ENCODE measurements at regions of chr14 and their contacts with region 1.

Region 1: GRCh38 chr14:55129428-55130195 is 560 bp downstream of the LGALS3 start:
- DNase-seq: peak; percentile 32
- H3K4me3 Mint-ChIP-seq: peak overlapping the region; percentile 79
- H3K27ac Mint-ChIP-seq: peak overlapping the region; percentile 70
- H3K4me1 Mint-ChIP-seq: peaks cover 26% of the 10 kb centered on the region
- H3K27me3 Mint-ChIP-seq: peaks cover 32% of the 10 kb centered on the region

Region 2: DNA sequence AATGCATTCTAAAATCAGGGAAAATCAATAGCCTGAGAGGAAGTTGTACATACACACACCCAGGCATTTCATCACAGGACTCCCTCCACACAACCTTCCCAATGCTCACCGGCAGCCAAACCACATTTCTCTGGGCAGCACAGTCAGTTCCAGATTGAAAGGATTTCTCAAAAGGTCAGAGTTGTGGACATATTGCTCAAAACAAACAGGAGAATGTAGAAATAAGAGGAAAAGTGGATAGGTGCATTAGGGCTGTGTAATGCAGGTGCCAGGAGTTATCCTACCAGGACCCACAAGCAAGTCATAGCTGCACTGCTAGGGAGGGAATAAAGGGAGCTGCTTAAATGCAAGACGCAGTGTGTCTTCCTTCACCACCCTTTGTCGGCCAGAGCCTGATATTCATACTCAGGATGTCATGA is 289.9 kb before region 1 on chr14:
- intact Hi-C with region 1: no loop called
- DNase-seq: no peak
- H3K4me3 Mint-ChIP-seq: no peak overlapping the region
- H3K27ac Mint-ChIP-seq: no peak overlapping the region
- H3K4me1 Mint-ChIP-seq: no peaks in the 10 kb centered on the region
- H3K27me3 Mint-ChIP-seq: no peaks in the 10 kb centered on the region

Region 3: DNA sequence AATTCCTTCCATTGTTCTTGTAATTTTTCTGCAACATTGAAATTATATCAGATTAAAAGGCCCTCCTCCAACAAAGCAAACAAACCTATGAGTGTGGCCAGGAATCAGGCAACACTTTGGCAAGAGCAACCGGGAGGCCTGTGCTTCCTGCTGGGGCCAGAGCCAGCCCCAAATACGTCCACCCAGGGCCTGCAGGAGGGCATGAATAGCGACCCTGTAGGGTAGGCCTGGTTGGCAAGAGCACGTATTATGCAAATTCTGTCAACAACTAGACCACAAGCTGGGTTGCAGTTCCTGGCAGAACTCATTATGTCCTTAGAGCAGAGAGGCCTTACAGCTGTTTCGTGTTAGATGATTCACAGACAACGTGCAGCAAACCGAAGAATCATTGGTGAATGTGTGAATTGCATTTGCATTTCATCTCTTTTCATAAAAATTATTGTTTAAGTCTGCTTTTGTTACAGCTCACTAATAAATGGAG is 27.4 kb before region 1 on chr14:
- intact Hi-C with region 1: loop called (anchors 1 kb)
- DNase-seq: peak; percentile 41
- H3K4me3 Mint-ChIP-seq: peak overlapping the region; percentile 41
- H3K27ac Mint-ChIP-seq: peak overlapping the region; percentile 94
- H3K4me1 Mint-ChIP-seq: peaks cover 62% of the 10 kb centered on the region
- H3K27me3 Mint-ChIP-seq: no peaks in the 10 kb centered on the region

Region 4: DNA sequence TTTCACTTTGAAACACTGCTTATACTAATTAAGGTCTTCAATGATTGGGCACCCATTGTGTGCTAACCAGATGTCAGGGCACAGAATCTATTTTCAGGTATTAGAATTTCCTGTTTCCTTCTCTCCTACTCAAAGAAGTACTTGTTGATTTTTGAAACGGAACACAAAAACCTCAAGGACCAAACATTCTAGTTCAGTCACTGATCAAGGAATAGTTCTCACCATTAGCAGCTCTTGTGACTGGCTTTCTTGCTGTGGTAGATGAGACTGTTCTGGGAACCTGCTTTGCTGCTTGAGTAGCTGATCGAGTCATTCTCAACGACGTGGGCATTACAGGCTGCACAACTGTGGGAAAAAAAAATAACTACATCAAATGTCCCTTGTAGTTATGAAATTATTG is 50.8 kb after region 1 on chr14:
- intact Hi-C with region 1: no loop called
- DNase-seq: no peak
- H3K4me3 Mint-ChIP-seq: no peak overlapping the region
- H3K27ac Mint-ChIP-seq: no peak overlapping the region
- H3K4me1 Mint-ChIP-seq: peaks cover 5% of the 10 kb centered on the region
- H3K27me3 Mint-ChIP-seq: no peaks in the 10 kb centered on the region